ENCODE measurements at regions of chr10 and their contacts with region 1.

Region 1: GRCh38 chr10:21953585-21954057 is 49.9 kb downstream of the DNAJC1 start:
- H3K4me3 Mint-ChIP-seq: no peak overlapping the region
- H3K27ac Mint-ChIP-seq: no peak overlapping the region
- H3K4me1 Mint-ChIP-seq: no peaks in the 10 kb centered on the region
- H3K27me3 Mint-ChIP-seq: no peaks in the 10 kb centered on the region

Region 2: DNA sequence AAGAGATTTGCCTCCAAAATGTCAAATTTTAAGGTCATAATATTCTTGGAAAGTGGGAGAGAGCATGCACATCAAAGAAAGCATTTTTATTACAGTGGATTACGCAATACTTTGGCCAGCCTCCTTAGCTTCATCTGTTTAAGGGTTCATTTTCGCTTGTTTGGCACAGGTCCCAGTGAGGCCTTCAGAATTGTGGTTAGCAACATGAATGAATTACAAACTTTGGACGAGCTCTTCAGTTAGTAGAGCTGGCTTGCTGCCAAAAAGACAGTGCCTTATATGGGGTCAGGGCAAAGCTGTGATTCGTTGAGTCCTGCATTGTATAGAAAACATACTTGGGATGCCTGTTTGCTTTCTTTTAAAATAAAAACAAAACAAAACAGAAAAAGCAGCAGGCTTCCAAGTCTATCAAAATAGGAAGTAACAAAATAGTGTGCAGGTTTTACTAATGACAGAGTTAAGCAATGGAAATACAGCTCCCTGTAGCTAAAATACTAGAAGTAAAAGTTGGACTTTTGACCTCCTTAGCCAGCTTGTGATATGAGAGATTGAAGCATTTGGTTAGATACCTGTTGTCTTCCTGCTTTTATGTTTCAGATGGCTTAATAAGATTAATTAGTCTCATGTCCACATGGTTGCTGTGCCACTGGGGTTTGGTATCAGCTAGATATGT is 228.8 kb before region 1 on chr10:
- intact Hi-C with region 1: loop called (anchors 10 kb)
- H3K4me3 Mint-ChIP-seq: no peak overlapping the region
- H3K27ac Mint-ChIP-seq: no peak overlapping the region
- H3K4me1 Mint-ChIP-seq: peaks cover 7% of the 10 kb centered on the region
- H3K27me3 Mint-ChIP-seq: no peaks in the 10 kb centered on the region

Region 3: GRCh38 chr10:22042557-22043326 is 89.1 kb after region 1 on chr10:
- intact Hi-C with region 1: no loop called
- H3K4me3 Mint-ChIP-seq: no peak overlapping the region
- H3K27ac Mint-ChIP-seq: no peak overlapping the region
- H3K4me1 Mint-ChIP-seq: peaks cover 5% of the 10 kb centered on the region
- H3K27me3 Mint-ChIP-seq: peaks cover 3% of the 10 kb centered on the region

Measured in dendritic cell treated with granulocyte-macrophage colony-stimulating factor and Interleukin-4, amounts not matched to agents 40 ng/mL and 50 ng/mL, for 4 days (primary cell).